ENCODE measurements at regions of chr2 and their contacts with region 1.

Region 1: GRCh38 chr2:160324161-160324800 is 124.2 kb upstream of the ITGB6 start:
- DNase-seq: peak; percentile 79
- H3K4me3 Mint-ChIP-seq: no peak overlapping the region
- H3K27ac Mint-ChIP-seq: no peak overlapping the region
- H3K4me1 Mint-ChIP-seq: peaks cover 60% of the 10 kb centered on the region
- H3K27me3 Mint-ChIP-seq: no peaks in the 10 kb centered on the region

Region 2: DNA sequence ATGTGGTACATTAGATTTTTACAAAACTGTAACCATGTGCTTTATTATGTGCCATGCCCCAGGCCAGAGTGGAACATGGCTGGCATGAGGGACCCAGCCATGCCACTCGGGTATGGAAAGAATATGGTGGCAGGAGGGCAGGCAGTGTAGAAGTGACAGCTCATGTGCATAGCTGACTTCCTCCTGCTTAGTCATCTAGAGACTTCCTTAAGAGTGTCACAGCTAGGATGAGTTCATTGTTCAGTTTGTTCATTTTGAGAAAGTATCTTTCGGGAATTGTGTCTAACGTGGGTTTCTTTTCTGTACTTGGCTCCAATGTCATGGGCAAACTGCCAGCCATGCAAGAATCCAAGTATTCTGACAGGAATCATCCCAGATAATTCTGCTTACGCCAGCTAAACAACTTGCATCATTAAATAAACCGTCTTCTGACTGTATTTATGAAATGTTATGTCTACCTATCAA is 29.9 kb before region 1 on chr2:
- intact Hi-C with region 1: loop called (anchors 2 kb)
- DNase-seq: peak; percentile 66
- H3K4me3 Mint-ChIP-seq: peak overlapping the region; percentile 17
- H3K27ac Mint-ChIP-seq: peak overlapping the region; percentile 23
- H3K4me1 Mint-ChIP-seq: peaks cover 48% of the 10 kb centered on the region
- H3K27me3 Mint-ChIP-seq: no peaks in the 10 kb centered on the region

Region 3: GRCh38 chr2:160338901-160339685 is 14.8 kb after region 1 on chr2:
- intact Hi-C with region 1: loop called (anchors 1 kb)
- DNase-seq: no peak
- H3K4me3 Mint-ChIP-seq: no peak overlapping the region
- H3K27ac Mint-ChIP-seq: no peak overlapping the region
- H3K4me1 Mint-ChIP-seq: peaks cover 36% of the 10 kb centered on the region
- H3K27me3 Mint-ChIP-seq: no peaks in the 10 kb centered on the region

Region 4: GRCh38 chr2:160918906-160919503 is 594.7 kb after region 1 on chr2:
- intact Hi-C with region 1: loop called (anchors 2 kb)
- DNase-seq: peak; percentile 75
- H3K4me3 Mint-ChIP-seq: no peak overlapping the region
- H3K27ac Mint-ChIP-seq: no peak overlapping the region
- H3K4me1 Mint-ChIP-seq: no peaks in the 10 kb centered on the region
- H3K27me3 Mint-ChIP-seq: peaks cover 14% of the 10 kb centered on the region